CD8-positive, alpha-beta memory T cell (primary cell): ENCODE measurements at regions of chr15 and their contacts with region 1.

Region 1: DNA sequence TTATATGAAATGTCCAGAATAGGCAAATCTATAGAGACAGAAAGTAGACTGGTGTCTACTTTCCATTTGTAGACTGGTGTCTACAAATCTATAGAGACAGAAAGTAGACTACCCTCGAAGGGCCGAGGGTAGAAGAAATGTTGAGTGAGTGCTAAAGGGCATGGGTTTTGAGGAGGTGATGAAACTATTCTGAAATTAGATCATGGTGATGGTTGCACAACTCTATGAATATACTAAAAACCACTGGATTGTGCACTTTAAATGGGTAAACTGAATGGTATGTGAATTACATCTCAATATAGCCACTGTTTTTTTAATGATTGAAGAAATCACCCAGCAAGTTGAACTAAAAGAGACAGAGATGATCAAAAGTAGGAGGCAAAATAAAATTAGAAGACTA is 27.9 kb downstream of the TP53BP1 start:
- DNase-seq: no peak
- H3K4me3 ChIP-seq: no peak overlapping the region
- H3K4me3 Mint-ChIP-seq: no peak overlapping the region
- H3K27ac ChIP-seq: no peak overlapping the region
- H3K27ac Mint-ChIP-seq: no peak overlapping the region
- H3K4me1 ChIP-seq: no peaks in the 10 kb centered on the region
- H3K4me1 Mint-ChIP-seq: no peaks in the 10 kb centered on the region
- H3K27me3 ChIP-seq: no peaks in the 10 kb centered on the region
- H3K27me3 Mint-ChIP-seq: no peaks in the 10 kb centered on the region

Region 2: GRCh38 chr15:43527016-43527801 is 62.1 kb after region 1 on chr15:
- CTCF ChIA-PET with region 1: no interaction called
- POLR2A ChIA-PET with region 1: interaction called, 10 read pairs
- DNase-seq: no peak
- H3K4me3 ChIP-seq: no peak overlapping the region
- H3K4me3 Mint-ChIP-seq: no peak overlapping the region
- H3K27ac ChIP-seq: no peak overlapping the region
- H3K27ac Mint-ChIP-seq: peak overlapping the region in 1 of 8 donors; percentile 50
- H3K4me1 ChIP-seq: no peaks in the 10 kb centered on the region
- H3K4me1 Mint-ChIP-seq: peaks cover 3 to 7% (median 7%) of the 10 kb centered on the region in 3 donors
- H3K27me3 ChIP-seq: no peaks in the 10 kb centered on the region
- H3K27me3 Mint-ChIP-seq: peaks cover 0 to 3% of the 10 kb centered on the region in 2 donors